IMR-90 (cell line): ENCODE measurements at regions of chr15 and their contacts with region 1.

Region 1: GRCh38 chr15:99071091-99071680 is 33.7 kb upstream of the SYNM start:
- DNase-seq: no peak
- ATAC-seq: no peak
- H3K4me3 ChIP-seq: no peak overlapping the region
- H3K27ac ChIP-seq: no peak overlapping the region
- H3K4me1 ChIP-seq: no peaks in the 10 kb centered on the region
- H3K27me3 ChIP-seq: no peaks in the 10 kb centered on the region
- CTCF ChIP-seq: no peak
- POLR2A ChIP-seq: no peak
- RAD21 ChIP-seq: no peak

Region 2: GRCh38 chr15:98967096-98967495 is 104.1 kb before region 1 on chr15:
- CTCF ChIA-PET with region 1: no interaction called
- POLR2A ChIA-PET with region 1: interaction called, 12 read pairs
- dilution Hi-C with region 1: no loop called
- in situ Hi-C with region 1: no loop called
- intact Hi-C with region 1: no loop called
- DNase-seq: no peak
- ATAC-seq: no peak
- H3K4me3 ChIP-seq: no peak overlapping the region
- H3K27ac ChIP-seq: no peak overlapping the region
- H3K4me1 ChIP-seq: peaks cover 11% of the 10 kb centered on the region
- H3K27me3 ChIP-seq: no peaks in the 10 kb centered on the region
- CTCF ChIP-seq: no peak
- POLR2A ChIP-seq: no peak
- RAD21 ChIP-seq: no peak